Activated naive CD8-positive, alpha-beta T cell treated with anti-CD3 and anti-CD28 coated beads, Interleukin-2, amount 10 ng/mL, durations not matched to agents 7 days and 5 days (primary cell): ENCODE measurements at regions of chr6 and their contacts with region 1.

Region 1: DNA sequence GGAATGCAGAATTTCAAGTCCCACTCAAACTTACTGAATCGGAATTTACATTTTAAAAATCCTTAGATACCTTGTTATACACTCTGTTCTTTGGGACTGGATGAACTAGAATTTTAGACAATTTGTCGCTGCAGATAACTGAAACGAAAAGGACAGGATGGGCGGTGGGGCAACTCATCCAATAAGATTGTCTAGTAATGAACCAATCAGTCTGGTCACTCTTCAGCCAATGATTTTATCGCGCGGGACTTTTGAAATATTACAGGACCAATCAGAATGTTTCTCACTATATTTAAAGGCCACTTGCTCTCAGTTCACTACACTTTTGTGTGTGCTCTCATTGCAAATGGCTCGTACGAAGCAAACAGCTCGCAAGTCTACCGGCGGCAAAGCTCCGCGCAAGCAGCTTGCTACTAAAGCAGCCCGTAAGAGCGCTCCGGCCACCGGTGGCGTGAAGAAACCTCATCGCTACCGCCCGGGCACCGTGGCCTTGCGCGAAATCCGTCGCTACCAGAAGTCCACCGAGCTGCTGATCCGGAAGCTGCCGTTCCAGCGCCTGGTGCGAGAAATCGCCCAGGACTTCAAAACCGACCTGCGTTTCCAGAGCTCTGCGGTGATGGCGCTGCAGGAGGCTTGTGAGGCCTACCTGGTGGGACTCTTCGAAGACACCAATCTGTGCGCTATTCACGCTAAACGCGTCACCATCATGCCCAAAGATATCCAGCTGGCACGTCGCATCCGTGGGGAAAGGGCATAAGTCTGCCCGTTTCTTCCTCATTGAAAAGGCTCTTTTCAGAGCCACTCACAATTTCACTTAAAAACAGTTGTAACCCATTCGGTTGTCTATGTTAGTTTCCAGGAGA is 41.9 kb upstream of the HFE start:
- DNase-seq: peak; percentile 82
- ATAC-seq: peak; percentile 56
- H3K4me3 Mint-ChIP-seq: peak overlapping the region; percentile 86
- H3K27ac Mint-ChIP-seq: peak overlapping the region; percentile 99
- H3K4me1 Mint-ChIP-seq: peaks cover 41% of the 10 kb centered on the region
- H3K27me3 Mint-ChIP-seq: no peaks in the 10 kb centered on the region

Region 2: DNA sequence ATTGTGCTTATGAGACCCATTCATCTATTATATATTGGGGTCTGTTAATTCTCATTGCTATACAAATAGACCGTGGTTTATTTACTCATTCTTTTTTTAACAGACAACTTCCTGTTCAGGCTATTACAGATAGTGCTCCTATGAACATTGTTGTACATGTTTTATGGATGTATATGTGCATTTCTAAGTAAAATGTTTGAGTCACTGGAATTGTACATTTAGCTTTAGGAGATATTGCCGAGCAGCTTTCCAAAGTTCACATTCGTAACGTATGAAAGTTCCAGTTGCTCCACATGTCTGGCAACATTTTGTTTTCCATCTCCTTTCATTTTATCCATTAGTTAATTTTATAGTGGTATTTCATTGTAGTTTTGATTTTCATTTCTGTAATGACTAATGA is 133.9 kb before region 1 on chr6:
- POLR2A ChIA-PET with region 1: no interaction called
- DNase-seq: no peak
- ATAC-seq: no peak
- H3K4me3 Mint-ChIP-seq: no peak overlapping the region
- H3K27ac Mint-ChIP-seq: no peak overlapping the region
- H3K4me1 Mint-ChIP-seq: peaks cover 2% of the 10 kb centered on the region
- H3K27me3 Mint-ChIP-seq: peaks cover 14% of the 10 kb centered on the region

Region 3: GRCh38 chr6:25922301-25922700 is 123.0 kb before region 1 on chr6:
- POLR2A ChIA-PET with region 1: no interaction called
- DNase-seq: no peak
- ATAC-seq: no peak
- H3K4me3 Mint-ChIP-seq: no peak overlapping the region
- H3K27ac Mint-ChIP-seq: no peak overlapping the region
- H3K4me1 Mint-ChIP-seq: no peaks in the 10 kb centered on the region
- H3K27me3 Mint-ChIP-seq: no peaks in the 10 kb centered on the region

Region 4: GRCh38 chr6:26071135-26071534 is 25.8 kb after region 1 on chr6:
- POLR2A ChIA-PET with region 1: no interaction called
- DNase-seq: no peak
- ATAC-seq: no peak
- H3K4me3 Mint-ChIP-seq: no peak overlapping the region
- H3K27ac Mint-ChIP-seq: no peak overlapping the region
- H3K4me1 Mint-ChIP-seq: peaks cover 6% of the 10 kb centered on the region
- H3K27me3 Mint-ChIP-seq: peaks cover 25% of the 10 kb centered on the region

Region 5: GRCh38 chr6:26103770-26104456 is 58.6 kb after region 1 on chr6:
- POLR2A ChIA-PET with region 1: interaction called, 55 read pairs
- DNase-seq: peak; percentile 86
- ATAC-seq: peak; percentile 89
- H3K4me3 Mint-ChIP-seq: peak overlapping the region; percentile 93
- H3K27ac Mint-ChIP-seq: peak overlapping the region; percentile 100
- H3K4me1 Mint-ChIP-seq: peaks cover 18% of the 10 kb centered on the region
- H3K27me3 Mint-ChIP-seq: no peaks in the 10 kb centered on the region

Region 6: GRCh38 chr6:26204332-26205165 is 159.3 kb after region 1 on chr6:
- POLR2A ChIA-PET with region 1: interaction called, 181 read pairs
- DNase-seq: peak; percentile 84
- ATAC-seq: peak; percentile 64
- H3K4me3 Mint-ChIP-seq: no peak overlapping the region
- H3K27ac Mint-ChIP-seq: no peak overlapping the region
- H3K4me1 Mint-ChIP-seq: peaks cover 34% of the 10 kb centered on the region
- H3K27me3 Mint-ChIP-seq: no peaks in the 10 kb centered on the region

Region 7: GRCh38 chr6:26249957-26250697 is 204.8 kb after region 1 on chr6:
- POLR2A ChIA-PET with region 1: interaction called, 19 read pairs
- DNase-seq: peak; percentile 79
- ATAC-seq: peak; percentile 53
- H3K4me3 Mint-ChIP-seq: peak overlapping the region; percentile 90
- H3K27ac Mint-ChIP-seq: peak overlapping the region; percentile 99
- H3K4me1 Mint-ChIP-seq: peaks cover 16% of the 10 kb centered on the region
- H3K27me3 Mint-ChIP-seq: no peaks in the 10 kb centered on the region

Region 8: DNA sequence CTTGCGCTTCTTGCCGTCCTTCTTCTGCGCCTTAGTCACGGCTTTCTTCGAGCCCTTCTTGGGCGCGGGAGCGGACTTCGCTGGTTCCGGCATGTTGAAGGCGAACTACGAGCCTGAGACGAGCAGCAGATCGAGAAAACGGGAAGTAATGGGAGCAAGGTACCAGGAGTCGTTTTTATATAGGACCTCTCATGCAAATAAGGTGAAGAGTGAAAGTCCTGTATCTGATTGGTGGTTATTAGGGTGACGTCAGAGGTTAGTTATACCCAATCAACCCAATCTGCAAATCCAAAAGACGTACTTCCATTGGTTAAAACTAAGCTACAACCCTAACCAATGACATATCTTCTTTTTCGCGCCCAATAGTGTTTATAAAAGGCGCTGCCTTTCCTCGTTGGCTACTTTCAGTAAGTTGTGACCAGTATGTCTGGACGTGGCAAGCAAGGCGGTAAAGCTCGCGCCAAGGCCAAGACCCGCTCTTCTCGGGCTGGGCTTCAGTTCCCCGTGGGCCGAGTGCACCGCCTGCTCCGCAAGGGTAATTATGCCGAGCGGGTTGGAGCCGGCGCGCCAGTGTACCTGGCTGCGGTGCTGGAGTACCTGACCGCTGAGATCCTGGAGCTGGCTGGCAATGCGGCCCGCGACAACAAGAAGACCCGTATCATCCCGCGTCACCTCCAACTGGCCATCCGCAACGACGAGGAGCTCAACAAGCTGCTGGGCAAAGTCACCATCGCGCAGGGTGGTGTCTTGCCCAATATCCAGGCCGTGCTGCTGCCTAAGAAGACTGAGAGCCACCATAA is 1101.6 kb after region 1 on chr6:
- POLR2A ChIA-PET with region 1: interaction called, 10 read pairs
- DNase-seq: peak; percentile 83
- ATAC-seq: peak; percentile 71
- H3K4me3 Mint-ChIP-seq: no peak overlapping the region
- H3K27ac Mint-ChIP-seq: no peak overlapping the region
- H3K4me1 Mint-ChIP-seq: peaks cover 18% of the 10 kb centered on the region
- H3K27me3 Mint-ChIP-seq: no peaks in the 10 kb centered on the region

Region 9: GRCh38 chr6:27871924-27872638 is 1826.8 kb after region 1 on chr6:
- POLR2A ChIA-PET with region 1: interaction called, 68 read pairs
- DNase-seq: peak; percentile 80
- ATAC-seq: peak; percentile 63
- H3K4me3 Mint-ChIP-seq: peak overlapping the region; percentile 92
- H3K27ac Mint-ChIP-seq: peak overlapping the region; percentile 93
- H3K4me1 Mint-ChIP-seq: peaks cover 44% of the 10 kb centered on the region
- H3K27me3 Mint-ChIP-seq: no peaks in the 10 kb centered on the region